Posterior vena cava (tissue), 2 donors: ENCODE measurements at regions of chr14 and their contacts with region 1.

Region 1: GRCh38 chr14:73295198-73295796 is 58.0 kb downstream of the PAPLN start:
- DNase-seq: no peak

Region 2: DNA sequence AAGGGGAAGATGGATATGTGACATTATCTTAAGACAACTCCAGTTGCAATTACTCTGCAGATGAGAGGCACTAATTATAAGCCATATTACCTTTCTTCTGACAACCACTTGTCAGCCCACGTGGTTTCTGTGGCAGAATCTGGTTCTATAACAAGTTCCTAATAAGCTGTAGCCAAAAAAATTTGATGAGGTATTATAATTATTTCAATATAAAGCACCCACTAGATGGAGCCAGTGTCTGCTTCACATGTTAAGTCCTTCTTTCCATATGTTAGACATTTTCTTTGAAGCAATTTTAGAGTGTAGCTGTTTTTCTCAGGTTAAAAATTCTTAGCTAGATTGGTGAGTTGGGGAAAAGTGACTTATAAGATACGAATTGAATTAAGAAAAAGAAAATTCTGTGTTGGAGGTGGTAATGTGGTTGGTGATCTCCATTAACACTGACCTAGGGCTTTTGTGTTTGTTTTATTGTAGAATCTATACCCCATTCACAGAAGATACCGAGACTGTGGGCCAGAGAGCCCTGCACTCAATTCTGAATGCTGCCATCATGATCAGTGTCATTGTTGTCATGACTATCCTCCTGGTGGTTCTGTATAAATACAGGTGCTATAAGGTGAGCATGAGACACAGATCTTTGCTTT is 122.1 kb before region 1 on chr14:
- intact Hi-C with region 1: loop called in 1 of 2 experiments (anchors 10 kb)
- DNase-seq: no peak

Region 3: DNA sequence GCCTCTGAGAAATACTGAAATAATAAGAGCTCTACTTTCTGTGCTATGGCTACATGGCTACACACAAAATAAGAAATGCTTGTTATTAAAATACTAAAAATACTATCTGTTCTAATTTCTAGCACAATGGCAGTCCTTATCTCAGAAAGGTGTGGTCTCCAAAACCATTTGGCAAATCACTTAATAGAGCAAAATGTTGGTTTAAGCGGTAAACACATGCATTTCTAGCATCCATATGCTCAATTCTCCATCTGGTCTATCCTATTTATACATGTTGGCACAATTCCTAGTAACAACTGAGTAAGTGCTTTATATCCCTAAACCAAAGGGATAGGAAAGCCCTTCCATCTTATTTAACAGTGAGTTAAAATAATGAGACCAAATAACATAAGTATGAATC is 49.0 kb after region 1 on chr14:
- intact Hi-C with region 1: no loop called
- DNase-seq: no peak

Region 4: GRCh38 chr14:73472185-73473114 is 177.2 kb after region 1 on chr14:
- intact Hi-C with region 1: loop called (anchors 5 to 10 kb)
- DNase-seq: no peak